Heart left ventricle (tissue), 16 donors: ENCODE measurements at regions of chr9 and their contacts with region 1.

Region 1: GRCh38 chr9:93566408-93567270 is 9.7 kb upstream of the PHF2 start:
- DNase-seq: peak; percentile 98 to 100 (median 99)
- ATAC-seq: peak; percentile 98 to 99 (median 99)
- H3K4me3 ChIP-seq: peak overlapping the region; percentile 4 to 75 (median 66)
- H3K27ac ChIP-seq: peak overlapping the region; percentile 87 to 98 (median 96)
- H3K4me1 ChIP-seq: peaks cover 0 to 25% (median 11%) of the 10 kb centered on the region in 12 donors
- H3K27me3 ChIP-seq: no peaks in the 10 kb centered on the region
- CTCF ChIP-seq: peak; percentile 94 to 100 (median 98)
- POLR2A ChIP-seq: peak; percentile 74 to 96

Region 2: GRCh38 chr9:93095205-93096130 is 471.2 kb before region 1 on chr9:
- intact Hi-C with region 1: loop called in 1 of 10 experiments (anchors 10 kb)
- DNase-seq: peak; percentile 100
- ATAC-seq: peak; percentile 85 to 93 (median 90)
- H3K4me3 ChIP-seq: peak overlapping the region; percentile 51 to 100 (median 94)
- H3K27ac ChIP-seq: peak overlapping the region; percentile 80 to 98 (median 96)
- H3K4me1 ChIP-seq: peaks cover 15 to 67% (median 54%) of the 10 kb centered on the region in 12 donors
- H3K27me3 ChIP-seq: no peaks in the 10 kb centered on the region
- CTCF ChIP-seq: no peak
- POLR2A ChIP-seq: peak in 1 of 2 donors; percentile 86

Region 3: GRCh38 chr9:93159601-93160471 is 406.8 kb before region 1 on chr9:
- intact Hi-C with region 1: loop called in 2 of 10 experiments (anchors 10 kb)
- DNase-seq: peak; percentile 78 to 91 (median 86)
- ATAC-seq: peak; percentile 80 to 92 (median 90)
- H3K4me3 ChIP-seq: no peak overlapping the region
- H3K27ac ChIP-seq: no peak overlapping the region
- H3K4me1 ChIP-seq: peaks cover 0 to 29% (median 12%) of the 10 kb centered on the region in 12 donors
- H3K27me3 ChIP-seq: no peaks in the 10 kb centered on the region
- CTCF ChIP-seq: peak; percentile 85 to 98 (median 95)
- POLR2A ChIP-seq: no peak

Region 4: DNA sequence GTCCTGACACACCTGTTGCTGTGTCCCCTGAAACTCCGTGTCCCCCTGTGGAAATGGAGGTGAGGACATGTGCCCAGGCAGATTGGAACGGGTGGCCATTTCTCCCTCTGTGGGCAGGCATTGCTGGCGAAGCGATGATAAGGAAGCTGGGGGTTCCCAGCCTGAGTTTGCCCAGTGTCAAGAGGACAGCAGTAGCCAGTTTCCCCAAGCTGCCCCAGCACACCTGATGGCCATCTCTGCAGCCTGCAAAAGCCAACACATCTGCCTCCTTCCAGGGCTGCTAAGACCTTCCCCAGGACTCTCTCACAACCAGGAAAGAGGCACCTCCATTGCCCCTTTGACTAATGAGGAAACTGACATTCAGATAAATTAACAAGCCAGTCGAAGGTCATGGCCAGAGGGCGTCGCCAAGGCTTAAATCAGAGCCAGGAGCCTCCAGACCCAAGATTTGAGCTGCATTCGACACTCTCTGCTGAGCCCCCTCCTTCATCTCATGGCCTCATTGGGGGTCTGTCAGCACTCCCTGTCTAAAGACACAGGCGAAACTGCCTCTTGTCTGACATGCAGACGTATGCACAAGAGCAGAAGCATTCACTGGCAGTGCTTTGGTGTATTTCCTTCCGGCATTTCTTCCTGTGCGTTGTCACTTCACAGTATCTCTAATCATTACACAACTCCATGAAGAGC is 393.1 kb before region 1 on chr9:
- intact Hi-C with region 1: loop called in 2 of 10 experiments (anchors 10 kb)
- DNase-seq: peak in 1 of 5 donors; percentile 28
- ATAC-seq: peak in 2 of 4 donors; percentile 16 to 44
- H3K4me3 ChIP-seq: no peak overlapping the region
- H3K27ac ChIP-seq: no peak overlapping the region
- H3K4me1 ChIP-seq: peaks cover 0 to 14% (median 7%) of the 10 kb centered on the region in 12 donors
- H3K27me3 ChIP-seq: no peaks in the 10 kb centered on the region
- CTCF ChIP-seq: no peak
- POLR2A ChIP-seq: no peak

Region 5: GRCh38 chr9:93309889-93310425 is 256.7 kb before region 1 on chr9:
- intact Hi-C with region 1: loop called in 1 of 10 experiments (anchors 5 kb)
- DNase-seq: no peak
- ATAC-seq: no peak
- H3K4me3 ChIP-seq: no peak overlapping the region
- H3K27ac ChIP-seq: no peak overlapping the region
- H3K4me1 ChIP-seq: peaks cover 0 to 18% (median 10%) of the 10 kb centered on the region in 12 donors
- H3K27me3 ChIP-seq: no peaks in the 10 kb centered on the region
- CTCF ChIP-seq: no peak
- POLR2A ChIP-seq: no peak

Region 6: GRCh38 chr9:93319992-93320500 is 246.6 kb before region 1 on chr9:
- intact Hi-C with region 1: loop called in 1 of 10 experiments (anchors 10 kb)
- DNase-seq: no peak
- ATAC-seq: peak in 3 of 4 donors; percentile 5 to 21 (median 13)
- H3K4me3 ChIP-seq: no peak overlapping the region
- H3K27ac ChIP-seq: peak overlapping the region in 1 of 12 donors; percentile 5
- H3K4me1 ChIP-seq: no peaks in the 10 kb centered on the region
- H3K27me3 ChIP-seq: peaks cover 0 to 14% (median 0%) of the 10 kb centered on the region in 9 donors
- CTCF ChIP-seq: no peak
- POLR2A ChIP-seq: no peak